Heart right ventricle (tissue), 16 donors: ENCODE measurements at regions of chr19 and their contacts with region 1.

Region 1: GRCh38 chr19:40305403-40305802 is 20.3 kb upstream of the AKT2 start:
- DNase-seq: peak; percentile 62 to 85
- ATAC-seq: peak; percentile 67 to 90 (median 79)
- H3K4me3 ChIP-seq: no peak overlapping the region
- H3K27ac ChIP-seq: no peak overlapping the region
- H3K4me1 ChIP-seq: peaks cover 0 to 4% (median 0%) of the 10 kb centered on the region in 9 donors
- H3K27me3 ChIP-seq: no peaks in the 10 kb centered on the region
- CTCF ChIP-seq: peak; percentile 59 to 87 (median 81)

Region 2: GRCh38 chr19:40059624-40060023 is 245.8 kb before region 1 on chr19:
- intact Hi-C with region 1: no loop called
- DNase-seq: no peak
- ATAC-seq: no peak
- H3K4me3 ChIP-seq: no peak overlapping the region
- H3K27ac ChIP-seq: no peak overlapping the region
- H3K4me1 ChIP-seq: peaks cover 0 to 15% (median 13%) of the 10 kb centered on the region in 9 donors
- H3K27me3 ChIP-seq: no peaks in the 10 kb centered on the region
- CTCF ChIP-seq: no peak

Region 3: DNA sequence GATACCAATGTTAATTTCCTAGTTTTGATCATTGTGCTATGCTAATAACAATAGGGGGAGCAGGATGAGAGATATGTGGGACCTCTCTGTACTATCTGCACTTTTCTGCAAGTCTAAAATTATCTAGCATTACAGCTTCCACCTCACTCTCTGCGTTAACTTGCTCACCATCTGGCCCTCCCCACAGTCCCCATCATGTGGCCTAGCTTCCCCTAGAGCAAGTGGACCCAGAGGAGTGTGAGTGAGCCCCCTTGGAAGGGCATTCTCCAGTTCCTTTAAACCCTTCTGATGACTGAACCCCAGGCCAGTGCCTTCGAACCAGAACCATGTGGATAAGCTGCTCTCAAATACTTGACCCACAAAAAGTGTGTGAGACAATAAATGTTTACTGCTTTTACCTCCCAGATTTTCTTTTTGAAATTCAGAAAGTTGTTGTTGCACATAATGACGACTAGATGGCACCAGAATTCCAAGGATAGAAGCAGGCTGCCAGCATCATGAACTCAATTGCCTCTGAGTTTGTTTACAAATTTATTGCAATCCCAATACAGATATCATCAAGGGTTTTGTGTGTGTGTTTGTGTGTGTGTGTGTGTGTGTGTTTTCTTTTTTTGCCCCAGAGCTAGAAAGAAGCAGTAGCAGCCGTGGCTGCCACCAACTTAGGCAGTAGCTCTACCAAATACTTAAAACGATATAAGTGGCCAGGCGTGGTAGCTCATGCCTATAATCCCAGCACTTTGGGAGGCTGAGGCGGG is 165.7 kb before region 1 on chr19:
- intact Hi-C with region 1: loop called in 1 of 10 experiments (anchors 10 kb)
- DNase-seq: no peak
- ATAC-seq: peak in 1 of 8 donors; percentile 39
- H3K4me3 ChIP-seq: no peak overlapping the region
- H3K27ac ChIP-seq: no peak overlapping the region
- H3K4me1 ChIP-seq: peaks cover 0 to 26% (median 16%) of the 10 kb centered on the region in 9 donors
- H3K27me3 ChIP-seq: peaks cover 0 to 19% (median 16%) of the 10 kb centered on the region in 7 donors
- CTCF ChIP-seq: peak; percentile 36 to 82 (median 72)

Region 4: GRCh38 chr19:40165362-40165937 is 140.0 kb before region 1 on chr19:
- intact Hi-C with region 1: no loop called
- DNase-seq: peak; percentile 26 to 46
- ATAC-seq: peak in 7 of 8 donors; percentile 39 to 73 (median 67)
- H3K4me3 ChIP-seq: no peak overlapping the region
- H3K27ac ChIP-seq: no peak overlapping the region
- H3K4me1 ChIP-seq: peaks cover 0 to 4% (median 0%) of the 10 kb centered on the region in 9 donors
- H3K27me3 ChIP-seq: peaks cover 0 to 27% (median 4%) of the 10 kb centered on the region in 7 donors
- CTCF ChIP-seq: peak; percentile 9 to 73 (median 58)

Region 5: GRCh38 chr19:40365613-40366401 is 60.4 kb after region 1 on chr19:
- intact Hi-C with region 1: no loop called
- DNase-seq: peak; percentile 51 to 72
- ATAC-seq: peak; percentile 74 to 92 (median 86)
- H3K4me3 ChIP-seq: peak overlapping the region in 8 of 10 donors; percentile 11 to 49 (median 44)
- H3K27ac ChIP-seq: peak overlapping the region in 1 of 10 donors; percentile 78
- H3K4me1 ChIP-seq: peaks cover 0 to 54% (median 2%) of the 10 kb centered on the region in 9 donors
- H3K27me3 ChIP-seq: no peaks in the 10 kb centered on the region
- CTCF ChIP-seq: no peak

Region 6: DNA sequence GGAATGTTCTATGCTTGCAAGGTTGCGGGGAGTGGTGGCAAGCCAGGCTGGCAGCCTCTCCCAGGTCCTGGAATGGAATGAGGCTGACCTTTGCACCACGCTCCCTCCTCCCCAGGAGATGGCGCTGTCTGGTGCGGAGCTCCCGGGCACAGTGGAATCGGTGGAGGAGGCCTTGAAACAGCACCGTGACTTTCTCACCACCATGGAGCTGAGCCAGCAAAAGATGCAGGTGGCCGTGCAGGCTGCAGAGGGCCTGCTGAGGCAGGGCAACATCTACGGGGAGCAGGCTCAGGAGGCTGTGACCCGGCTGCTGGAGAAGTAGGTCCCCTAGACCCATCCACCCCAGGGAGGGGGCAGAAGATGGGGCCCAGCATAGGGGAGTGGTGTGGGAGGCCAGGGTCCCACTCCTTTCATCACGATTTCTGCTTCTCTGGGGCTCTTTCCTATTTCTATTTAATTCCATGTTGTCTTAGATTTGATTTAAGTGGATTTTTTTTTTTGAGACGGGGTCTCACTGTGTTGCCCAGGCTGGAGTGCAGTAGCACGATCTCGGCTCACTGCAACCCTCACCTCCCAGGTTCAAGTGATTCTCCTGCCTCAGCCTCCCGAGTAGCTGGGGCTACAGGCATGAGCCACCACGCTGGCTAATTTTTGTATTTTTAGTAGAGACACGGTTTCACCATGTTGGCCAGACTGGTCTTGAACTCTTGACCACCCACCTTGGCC is 218.1 kb after region 1 on chr19:
- intact Hi-C with region 1: loop called in 5 of 10 experiments (anchors 5 to 10 kb)
- DNase-seq: peak; percentile 35 to 36
- ATAC-seq: peak in 6 of 8 donors; percentile 32 to 71 (median 48)
- H3K4me3 ChIP-seq: no peak overlapping the region
- H3K27ac ChIP-seq: no peak overlapping the region
- H3K4me1 ChIP-seq: peaks cover 0 to 15% (median 0%) of the 10 kb centered on the region in 9 donors
- H3K27me3 ChIP-seq: peaks cover 0 to 24% (median 14%) of the 10 kb centered on the region in 7 donors
- CTCF ChIP-seq: peak in 7 of 9 donors; percentile 45 to 64 (median 51)

Region 7: DNA sequence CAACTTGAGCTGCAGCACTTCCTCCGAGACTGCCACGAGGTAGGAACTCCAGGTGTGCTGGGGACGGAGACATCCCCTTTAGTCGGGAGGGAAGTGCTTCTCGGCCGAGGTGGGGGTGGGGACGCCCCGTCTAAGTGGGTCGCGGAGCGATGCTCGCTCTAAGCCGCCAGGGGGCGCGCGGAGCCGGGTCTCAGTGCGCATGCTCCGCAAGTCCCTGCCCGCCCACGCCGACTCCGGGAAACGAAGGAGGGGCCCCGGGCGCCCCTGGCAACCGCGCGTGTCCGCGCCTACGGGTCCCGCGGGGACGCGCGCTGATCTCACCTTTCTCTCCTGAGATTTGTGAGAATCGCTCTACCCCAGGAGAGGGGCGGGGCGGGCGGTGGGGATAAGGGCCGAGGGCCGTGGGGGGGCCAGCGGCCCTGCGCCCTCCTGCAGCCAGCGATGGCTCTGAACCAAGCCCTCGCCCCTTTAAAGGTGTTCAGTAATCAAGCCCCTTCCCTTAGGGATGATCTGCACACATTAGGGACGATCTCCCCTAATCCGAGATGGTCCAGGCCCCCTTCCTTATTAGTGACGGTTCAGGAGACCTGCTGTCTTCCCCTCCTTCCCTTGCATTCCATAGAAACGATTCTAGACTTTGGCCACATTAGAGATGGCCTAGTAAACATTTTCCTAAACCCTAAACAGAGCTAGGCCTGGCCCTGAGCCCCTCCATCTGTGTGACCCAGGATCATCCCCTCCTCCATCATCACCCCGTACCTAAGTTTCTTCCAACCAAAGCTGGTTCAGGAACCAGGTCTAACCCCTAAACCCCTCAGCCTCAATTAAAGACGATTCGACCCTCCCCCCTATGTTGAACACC is 223.9 kb after region 1 on chr19:
- intact Hi-C with region 1: loop called in 5 of 10 experiments (anchors 5 to 10 kb)
- DNase-seq: peak; percentile 81 to 86
- ATAC-seq: peak; percentile 86 to 96 (median 90)
- H3K4me3 ChIP-seq: peak overlapping the region in 9 of 10 donors; percentile 44 to 65 (median 59)
- H3K27ac ChIP-seq: peak overlapping the region in 2 of 10 donors; percentile 55 to 72
- H3K4me1 ChIP-seq: peaks cover 0 to 14% (median 9%) of the 10 kb centered on the region in 9 donors
- H3K27me3 ChIP-seq: peaks cover 0 to 17% (median 0%) of the 10 kb centered on the region in 7 donors
- CTCF ChIP-seq: peak; percentile 94 to 98 (median 96)